Activated CD8-positive, alpha-beta T cell treated with anti-CD3 and anti-CD28 coated beads for 36 hours (primary cell): ENCODE measurements at regions of chr10 and their contacts with region 1.

Region 1: GRCh38 chr10:70575874-70576802 is 26.4 kb downstream of the PRF1 start:
- DNase-seq: peak; percentile 60
- ATAC-seq: peak; percentile 19
- H3K4me3 Mint-ChIP-seq: peak overlapping the region; percentile 10
- H3K27ac Mint-ChIP-seq: peak overlapping the region; percentile 83
- H3K4me1 Mint-ChIP-seq: peaks cover 48% of the 10 kb centered on the region
- H3K27me3 Mint-ChIP-seq: no peaks in the 10 kb centered on the region
- CTCF ChIP-seq: no peak

Region 2: DNA sequence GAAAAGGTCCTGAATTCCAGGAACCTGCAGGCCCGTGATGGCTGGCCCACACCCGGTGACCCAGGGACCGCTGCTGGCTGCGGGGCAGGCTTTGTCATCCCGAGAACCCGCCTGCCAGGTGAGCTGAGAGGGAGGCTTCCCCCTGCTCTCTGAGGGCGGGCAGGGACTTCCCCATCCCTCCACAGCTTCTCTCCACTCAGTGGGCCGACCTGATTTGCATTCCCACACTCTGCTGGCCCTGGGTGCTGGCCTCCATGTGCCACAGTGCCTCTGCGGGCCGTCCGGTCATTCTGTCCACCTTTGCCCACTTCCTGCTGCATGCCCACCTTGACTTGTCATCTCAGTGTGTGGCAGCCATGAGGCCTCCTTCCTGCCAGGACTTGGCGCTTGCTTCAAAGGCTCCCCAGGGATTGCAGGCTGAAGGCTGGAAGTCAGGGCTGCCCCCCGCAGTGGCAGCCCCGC is 62.3 kb before region 1 on chr10:
- CTCF ChIA-PET with region 1: no interaction called
- POLR2A ChIA-PET with region 1: no interaction called
- intact Hi-C with region 1: no loop called
- DNase-seq: peak; percentile 61
- ATAC-seq: peak; percentile 85
- H3K4me3 Mint-ChIP-seq: no peak overlapping the region
- H3K27ac Mint-ChIP-seq: no peak overlapping the region
- H3K4me1 Mint-ChIP-seq: peaks cover 4% of the 10 kb centered on the region
- H3K27me3 Mint-ChIP-seq: no peaks in the 10 kb centered on the region
- CTCF ChIP-seq: no peak

Region 3: GRCh38 chr10:70540089-70540788 is 35.9 kb before region 1 on chr10:
- CTCF ChIA-PET with region 1: no interaction called
- POLR2A ChIA-PET with region 1: no interaction called
- intact Hi-C with region 1: no loop called
- DNase-seq: peak; percentile 48
- ATAC-seq: peak; percentile 55
- H3K4me3 Mint-ChIP-seq: no peak overlapping the region
- H3K27ac Mint-ChIP-seq: no peak overlapping the region
- H3K4me1 Mint-ChIP-seq: no peaks in the 10 kb centered on the region
- H3K27me3 Mint-ChIP-seq: no peaks in the 10 kb centered on the region
- CTCF ChIP-seq: peak; percentile 66

Region 4: DNA sequence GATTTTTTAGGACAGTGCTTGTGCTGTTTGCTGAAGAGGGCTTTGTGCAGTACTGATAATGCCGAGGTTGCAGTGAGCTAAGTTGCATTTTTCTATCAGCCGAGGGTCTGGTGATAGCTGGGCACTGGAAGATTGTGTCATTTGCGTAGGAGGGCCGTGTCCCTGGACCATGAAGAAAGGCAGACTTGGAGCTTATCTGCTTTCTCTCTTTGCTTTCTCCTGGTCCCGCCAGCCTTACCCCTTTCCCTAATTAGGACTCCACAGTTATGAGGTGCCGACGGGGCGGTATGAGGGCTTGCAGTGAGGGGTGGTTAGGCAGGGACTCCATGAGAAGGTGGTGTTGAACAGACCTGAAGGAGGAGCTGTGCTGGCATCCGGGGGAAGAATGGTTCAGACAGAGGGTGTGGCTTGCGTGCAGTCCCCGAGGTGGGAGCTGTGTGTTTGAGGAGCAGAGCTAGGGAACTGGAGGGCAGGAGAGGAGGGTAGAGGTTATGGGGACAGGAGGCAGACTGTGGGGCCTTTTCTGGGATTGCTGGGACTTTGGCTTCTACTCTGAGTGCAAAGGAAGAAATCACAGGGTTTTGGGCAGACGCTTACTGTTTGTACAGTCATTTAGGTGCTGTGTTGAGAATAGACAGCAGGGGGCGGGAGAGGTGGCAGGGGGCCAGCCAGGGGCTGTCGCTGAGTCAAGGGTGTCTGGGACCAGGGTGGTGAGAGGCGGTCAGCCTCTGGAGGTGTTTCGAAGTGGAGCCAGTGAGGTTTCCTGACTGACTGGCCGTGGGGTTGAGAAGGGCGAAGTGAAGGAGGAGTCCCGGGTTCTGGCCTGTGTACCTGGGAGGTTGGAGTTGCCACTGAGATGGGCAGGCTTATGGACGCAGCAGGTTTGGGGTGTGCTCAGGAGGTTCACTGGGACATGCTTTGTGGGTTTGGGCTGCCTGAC is 17.0 kb before region 1 on chr10:
- CTCF ChIA-PET with region 1: interaction called, 12 read pairs
- POLR2A ChIA-PET with region 1: interaction called, 6 read pairs
- intact Hi-C with region 1: no loop called
- DNase-seq: peak; percentile 91
- ATAC-seq: peak; percentile 95
- H3K4me3 Mint-ChIP-seq: peak overlapping the region; percentile 74
- H3K27ac Mint-ChIP-seq: peak overlapping the region; percentile 86
- H3K4me1 Mint-ChIP-seq: peaks cover 23% of the 10 kb centered on the region
- H3K27me3 Mint-ChIP-seq: peaks cover 1% of the 10 kb centered on the region
- CTCF ChIP-seq: peak; percentile 70

Region 5: DNA sequence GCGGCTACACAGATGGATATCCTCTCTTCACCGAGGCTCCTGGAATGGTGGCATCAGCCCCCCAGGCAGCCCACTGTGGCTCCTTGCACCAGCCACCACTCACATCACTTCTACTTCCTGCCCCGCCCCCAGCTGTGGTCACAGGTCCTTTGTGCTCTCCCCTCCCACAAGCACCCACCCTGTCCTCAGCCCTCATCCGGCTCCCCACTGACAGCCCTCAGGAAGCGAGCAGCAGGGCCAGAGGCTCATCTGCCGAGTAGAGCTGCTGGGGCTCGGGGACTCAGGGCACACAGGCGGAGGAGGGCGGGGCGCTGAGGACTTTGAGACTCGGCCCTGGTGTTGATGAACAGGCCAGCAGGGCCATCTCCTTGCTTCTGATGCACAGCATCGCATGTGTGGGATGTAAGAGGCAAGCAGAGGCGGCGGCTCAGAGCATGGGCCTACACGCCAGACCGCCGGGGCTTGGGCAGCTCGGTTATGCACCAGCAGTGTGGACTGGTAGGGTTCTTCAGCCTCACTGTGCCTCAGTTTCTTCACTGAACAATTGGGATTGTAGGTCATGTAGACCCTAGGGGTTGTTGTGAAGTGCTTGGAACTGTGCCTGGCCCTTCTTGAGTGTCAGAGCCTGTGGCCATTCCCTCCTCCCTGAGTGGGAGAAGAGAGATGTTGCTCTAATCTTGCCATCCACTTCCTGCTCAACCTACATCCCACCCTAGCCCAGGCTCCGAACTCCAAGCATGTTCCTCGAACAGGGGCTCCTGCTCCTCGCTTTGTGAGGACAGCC is 26.7 kb after region 1 on chr10 and contains the start of gene PRF1:
- CTCF ChIA-PET with region 1: interaction called, 3 read pairs
- POLR2A ChIA-PET with region 1: interaction called, 11 read pairs
- intact Hi-C with region 1: loop called (anchors 1 kb)
- DNase-seq: peak; percentile 98
- ATAC-seq: peak; percentile 89
- H3K4me3 Mint-ChIP-seq: peak within 1 kb of the TSS; percentile 98
- H3K27ac Mint-ChIP-seq: peak within 1 kb of the TSS; percentile 97
- H3K4me1 Mint-ChIP-seq: peaks cover 60% of the 10 kb centered on the region
- H3K27me3 Mint-ChIP-seq: no peaks in the 10 kb centered on the region
- CTCF ChIP-seq: no peak
- total RNA-seq, gene PRF1: 107 to 113 TPM

Region 6: DNA sequence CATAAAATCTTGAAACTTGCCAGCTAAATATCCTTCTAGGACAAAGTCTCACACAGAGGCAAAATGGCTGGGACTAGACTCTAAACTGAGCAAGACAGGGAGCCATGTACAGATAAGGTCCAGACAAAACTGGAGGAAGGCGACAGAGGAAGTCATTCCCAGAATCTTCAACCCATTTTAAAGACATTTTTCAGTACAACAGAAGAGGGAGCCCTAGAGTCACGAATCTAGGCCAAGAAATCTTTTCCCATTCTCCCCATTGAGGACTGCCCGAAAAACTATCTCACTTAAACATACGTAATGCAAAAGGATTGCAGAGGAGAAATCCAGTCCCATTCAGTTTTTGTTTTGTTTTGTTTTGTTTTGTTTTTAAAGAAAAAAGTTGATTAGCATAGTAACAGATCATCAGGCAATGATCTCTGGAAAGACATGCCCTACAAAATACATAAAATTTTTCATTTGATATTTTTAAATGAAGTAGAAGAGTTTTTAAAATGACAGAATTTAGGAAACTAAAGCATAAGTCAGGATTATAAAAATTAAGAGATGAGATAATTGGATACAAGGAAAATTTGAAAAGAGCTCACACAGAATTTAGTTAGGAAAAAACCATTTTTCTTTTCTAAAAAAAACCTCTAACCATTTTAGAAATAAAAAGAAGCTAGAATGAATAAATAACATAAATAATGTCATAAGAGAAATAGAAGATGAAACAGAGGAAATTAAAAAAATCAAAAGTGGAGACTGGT is 43.3 kb after region 1 on chr10:
- CTCF ChIA-PET with region 1: interaction called, 3 read pairs
- POLR2A ChIA-PET with region 1: interaction called, 6 read pairs
- intact Hi-C with region 1: loop called (anchors 1 kb)
- DNase-seq: no peak
- ATAC-seq: no peak
- H3K4me3 Mint-ChIP-seq: no peak overlapping the region
- H3K27ac Mint-ChIP-seq: peak overlapping the region; percentile 81
- H3K4me1 Mint-ChIP-seq: peaks cover 47% of the 10 kb centered on the region
- H3K27me3 Mint-ChIP-seq: no peaks in the 10 kb centered on the region
- CTCF ChIP-seq: peak; percentile 82